Activated naive CD4-positive, alpha-beta T cell treated with anti-CD3 and anti-CD28 coated beads for 36 hours (primary cell): ENCODE measurements at regions of chr21 and their contacts with region 1.

Region 1: GRCh38 chr21:42737951-42738590 is 84.7 kb downstream of the PDE9A start:
- DNase-seq: peak; percentile 32
- H3K4me3 Mint-ChIP-seq: peak overlapping the region; percentile 44
- H3K27ac Mint-ChIP-seq: peak overlapping the region; percentile 88
- H3K4me1 Mint-ChIP-seq: peaks cover 21% of the 10 kb centered on the region
- H3K27me3 Mint-ChIP-seq: no peaks in the 10 kb centered on the region

Region 2: GRCh38 chr21:42684109-42684916 is 53.8 kb before region 1 on chr21:
- CTCF ChIA-PET with region 1: no interaction called
- intact Hi-C with region 1: loop called (anchors 5 kb)
- DNase-seq: peak; percentile 74
- H3K4me3 Mint-ChIP-seq: peak overlapping the region; percentile 65
- H3K27ac Mint-ChIP-seq: peak overlapping the region; percentile 81
- H3K4me1 Mint-ChIP-seq: peaks cover 46% of the 10 kb centered on the region
- H3K27me3 Mint-ChIP-seq: no peaks in the 10 kb centered on the region